Adrenal gland (tissue), 19 donors: ENCODE measurements at regions of chr3 and their contacts with region 1.

Region 1: DNA sequence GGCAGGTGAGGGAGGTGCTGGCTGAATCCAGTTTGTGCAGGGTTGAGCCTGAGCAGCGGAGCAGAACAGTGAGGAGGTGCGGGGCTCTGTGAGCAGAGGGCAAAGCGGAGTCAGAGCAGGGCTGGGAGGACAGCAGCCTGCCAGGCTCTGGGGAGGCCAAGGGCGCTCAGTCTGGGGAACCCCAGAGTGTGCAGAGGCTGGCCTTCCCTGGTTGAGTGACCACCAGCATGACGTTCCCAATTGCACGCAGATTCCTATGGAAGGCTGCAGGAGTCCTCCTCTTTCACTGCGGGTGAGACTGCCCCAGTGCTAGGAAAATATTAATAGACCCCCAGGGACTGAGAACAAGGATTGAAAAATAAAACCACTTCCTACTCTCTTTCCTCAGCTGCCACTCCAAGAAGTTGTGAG is 13.2 kb downstream of the MRAS start:
- DNase-seq: no peak
- H3K4me3 ChIP-seq: no peak overlapping the region
- H3K27ac ChIP-seq: peak overlapping the region in 2 of 5 donors; percentile 38 to 70
- H3K4me1 ChIP-seq: peaks cover 29 to 54% of the 10 kb centered on the region in 2 donors
- H3K27me3 ChIP-seq: no peaks in the 10 kb centered on the region
- CTCF ChIP-seq: no peak
- POLR2A ChIP-seq: no peak

Region 2: GRCh38 chr3:138397983-138398382 is 36.4 kb after region 1 on chr3:
- intact Hi-C with region 1: loop called in 1 of 2 experiments (anchors 5 kb)
- DNase-seq: peak in 4 of 7 donors; percentile 16 to 60 (median 45)
- H3K4me3 ChIP-seq: no peak overlapping the region
- H3K27ac ChIP-seq: peak overlapping the region in 3 of 5 donors; percentile 29 to 92 (median 83)
- H3K4me1 ChIP-seq: peaks cover 4 to 37% of the 10 kb centered on the region in 2 donors
- H3K27me3 ChIP-seq: no peaks in the 10 kb centered on the region
- CTCF ChIP-seq: peak in 5 of 6 experiments; percentile 20 to 40 (median 26)
- POLR2A ChIP-seq: no peak

Region 3: GRCh38 chr3:138479438-138479863 is 117.9 kb after region 1 on chr3:
- intact Hi-C with region 1: no loop called
- DNase-seq: peak in 2 of 7 donors; percentile 36 to 43
- H3K4me3 ChIP-seq: no peak overlapping the region
- H3K27ac ChIP-seq: no peak overlapping the region
- H3K4me1 ChIP-seq: no peaks in the 10 kb centered on the region
- H3K27me3 ChIP-seq: no peaks in the 10 kb centered on the region
- CTCF ChIP-seq: peak; percentile 35 to 59 (median 45)
- POLR2A ChIP-seq: no peak